Gastrocnemius medialis (tissue), 4 donors: ENCODE measurements at regions of chr11 and their contacts with region 1.

Region 1: GRCh38 chr11:125887373-125888324 is at the start of gene HYLS1:
- DNase-seq: peak; percentile 91 to 92
- ATAC-seq: peak; percentile 97
- H3K4me3 ChIP-seq: peak within 1 kb of the TSS; percentile 66 to 93 (median 80)
- H3K27ac ChIP-seq: peak within 1 kb of the TSS; percentile 81 to 95 (median 92)
- H3K4me1 ChIP-seq: peaks cover 0 to 5% of the 10 kb centered on the region in 2 donors
- H3K27me3 ChIP-seq: no peaks in the 10 kb centered on the region
- CTCF ChIP-seq: peak in 4 of 5 experiments; percentile 11 to 51 (median 40)
- POLR2A ChIP-seq: peak; percentile 52 to 76
- total RNA-seq, gene HYLS1: 0.56 to 3.9 (median 1.9) TPM

Region 2: GRCh38 chr11:125111343-125112207 is 776.1 kb before region 1 on chr11 and contains the start of gene TMEM218:
- in situ Hi-C with region 1: loop called in 1 of 4 experiments (anchors 25 kb)
- intact Hi-C with region 1: no loop called
- DNase-seq: peak; percentile 99
- ATAC-seq: peak; percentile 98 to 99
- H3K4me3 ChIP-seq: peak within 1 kb of the TSS; percentile 86 to 97 (median 92)
- H3K27ac ChIP-seq: peak within 1 kb of the TSS; percentile 82 to 86 (median 84)
- H3K4me1 ChIP-seq: peaks cover 11 to 15% of the 10 kb centered on the region in 2 donors
- H3K27me3 ChIP-seq: peaks cover 0 to 3% (median 0%) of the 10 kb centered on the region in 3 donors
- CTCF ChIP-seq: no peak
- POLR2A ChIP-seq: no peak
- total RNA-seq, gene TMEM218: 6.3 to 11.2 (median 9.4) TPM

Region 3: DNA sequence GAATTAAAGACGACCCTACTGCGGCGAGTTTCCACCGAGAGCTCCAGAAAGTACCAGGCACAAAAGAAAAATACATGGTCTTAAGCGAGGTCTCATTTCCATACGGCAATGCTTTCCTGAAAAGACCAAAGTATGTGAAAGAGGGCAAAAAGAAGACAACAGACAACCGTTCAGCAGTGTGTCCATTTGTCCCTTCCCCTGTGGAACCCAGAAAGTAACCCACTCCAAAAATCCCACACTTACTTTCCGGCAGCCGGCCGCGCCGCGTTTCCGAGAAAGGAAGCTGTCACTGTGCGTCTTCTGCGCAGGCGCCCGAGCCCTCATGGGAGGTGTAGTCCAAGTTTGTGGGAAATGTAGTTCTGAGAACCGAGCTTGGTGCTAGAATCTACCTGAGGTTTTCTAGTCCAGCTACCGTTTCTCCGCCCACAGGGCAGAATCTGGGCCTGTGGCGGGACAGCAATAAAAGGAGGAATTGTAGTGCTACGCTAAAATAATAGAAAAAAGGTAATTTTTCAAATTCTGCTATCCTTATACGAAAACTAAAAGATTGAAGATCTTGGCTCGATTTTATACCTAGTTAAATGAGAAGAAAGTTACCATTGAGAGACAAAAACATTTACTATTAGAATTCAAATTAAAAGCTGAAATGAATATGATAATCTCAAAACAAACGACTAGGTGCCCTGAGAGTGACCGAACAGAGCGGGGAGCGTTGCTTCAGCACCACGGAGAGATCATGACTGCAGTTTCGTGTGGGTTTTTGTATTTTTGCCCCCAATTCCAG is 15.5 kb after region 1 on chr11 and contains the start of gene PUS3:
- in situ Hi-C with region 1: no loop called
- intact Hi-C with region 1: loop called (anchors 1 kb)
- DNase-seq: peak; percentile 74 to 87
- ATAC-seq: peak; percentile 91 to 98
- H3K4me3 ChIP-seq: peak within 1 kb of the TSS; percentile 62 to 85 (median 74)
- H3K27ac ChIP-seq: peak within 1 kb of the TSS; percentile 83 to 88 (median 84)
- H3K4me1 ChIP-seq: peaks cover 11 to 24% of the 10 kb centered on the region in 2 donors
- H3K27me3 ChIP-seq: peaks cover 24 to 28% (median 25%) of the 10 kb centered on the region in 3 donors
- CTCF ChIP-seq: no peak
- POLR2A ChIP-seq: peak; percentile 9 to 27
- total RNA-seq, gene PUS3: 7.0 to 13.5 (median 11.7) TPM

Region 4: GRCh38 chr11:126062679-126063506 is 175.2 kb after region 1 on chr11 and contains the start of gene CDON:
- in situ Hi-C with region 1: no loop called
- intact Hi-C with region 1: loop called (anchors 1 kb)
- DNase-seq: peak; percentile 84 to 87
- ATAC-seq: peak; percentile 95 to 96
- H3K4me3 ChIP-seq: peak within 1 kb of the TSS; percentile 65 to 84 (median 74)
- H3K27ac ChIP-seq: peak within 1 kb of the TSS; percentile 64 to 83 (median 68)
- H3K4me1 ChIP-seq: peaks cover 9 to 11% of the 10 kb centered on the region in 2 donors
- H3K27me3 ChIP-seq: peaks cover 0 to 7% (median under 1%) of the 10 kb centered on the region in 3 donors
- CTCF ChIP-seq: peak in 1 of 5 experiments; percentile 25
- POLR2A ChIP-seq: peak in 1 of 2 donors; percentile 27
- total RNA-seq, gene CDON: 1.0 to 2.0 (median 1.8) TPM